HCT116 (cell line): ENCODE measurements at regions of chr5 and their contacts with region 1.

Region 1: GRCh38 chr5:88729084-88729828 is 153.7 kb downstream of the MEF2C start:
- DNase-seq: peak; percentile 75
- ATAC-seq: peak; percentile 92
- H3K4me3 ChIP-seq: no peak overlapping the region
- H3K27ac ChIP-seq: no peak overlapping the region
- H3K4me1 ChIP-seq: no peaks in the 10 kb centered on the region; a peak in 1 of 4 replicates
- H3K27me3 ChIP-seq: no peaks in the 10 kb centered on the region
- CTCF ChIP-seq: peak; percentile 54 to 76 (median 61); a peak in 5 of 6 replicates
- POLR2A ChIP-seq: no peak
- RAD21 ChIP-seq: peak; percentile 86

Region 2: DNA sequence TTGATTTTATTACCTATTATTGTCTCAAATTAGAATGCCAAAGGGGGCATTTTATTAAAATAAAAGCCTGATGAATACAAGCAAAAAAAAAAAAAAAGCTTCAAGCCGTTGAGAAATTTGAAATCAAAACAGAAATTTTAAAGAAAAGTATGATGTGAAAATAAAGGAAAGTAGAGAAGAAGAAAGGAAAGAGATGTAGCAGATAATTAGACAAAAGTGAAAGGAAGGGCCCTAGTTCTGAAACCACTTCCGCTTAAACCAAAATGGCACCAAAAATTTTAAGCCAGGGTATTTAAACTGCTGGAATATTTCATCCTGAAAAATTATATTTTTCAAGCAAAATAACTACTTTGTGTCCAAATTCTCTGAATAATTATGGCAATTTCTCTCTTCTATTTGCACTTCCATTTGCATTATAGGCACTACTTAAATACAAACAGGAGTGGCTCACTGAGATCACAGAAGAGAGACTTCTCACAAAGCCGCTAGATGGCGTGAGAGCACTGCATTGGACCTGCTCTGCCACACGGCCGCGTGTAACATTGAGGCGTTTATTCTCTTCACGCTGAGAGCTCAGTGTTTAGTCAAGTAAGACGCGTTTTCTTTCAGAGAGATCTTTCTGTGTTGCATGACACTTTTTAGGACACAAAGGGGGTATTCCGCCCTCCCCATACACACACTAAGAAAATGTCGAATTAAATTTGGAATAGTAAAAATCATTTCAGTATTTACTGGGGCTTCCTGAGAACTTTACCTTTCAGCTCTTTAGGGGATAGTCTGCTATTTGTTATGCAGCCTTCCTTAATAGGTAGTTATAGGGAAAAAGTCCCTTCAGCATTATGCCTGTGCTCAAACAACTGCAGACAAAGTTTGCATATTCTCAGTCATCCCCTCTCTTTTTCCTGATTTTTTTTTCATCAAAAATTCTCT is 948.2 kb before region 1 on chr5:
- CTCF ChIA-PET with region 1: interaction called, 79 read pairs
- POLR2A ChIA-PET with region 1: interaction called, 4 read pairs
- RAD21 ChIA-PET with region 1: interaction called, 5 read pairs
- intact Hi-C with region 1: loop called (anchors 1 kb)
- DNase-seq: peak; percentile 76
- ATAC-seq: peak; percentile 98
- H3K4me3 ChIP-seq: no peak overlapping the region; a peak in 1 of 4 replicates
- H3K27ac ChIP-seq: no peak overlapping the region
- H3K4me1 ChIP-seq: peaks cover 0 to 3% of the 10 kb centered on the region in 2 experiments; a peak in 1 of 4 replicates
- H3K27me3 ChIP-seq: no peaks in the 10 kb centered on the region
- CTCF ChIP-seq: peak; percentile 72 to 91 (median 85)
- POLR2A ChIP-seq: no peak
- RAD21 ChIP-seq: peak; percentile 95

Region 3: DNA sequence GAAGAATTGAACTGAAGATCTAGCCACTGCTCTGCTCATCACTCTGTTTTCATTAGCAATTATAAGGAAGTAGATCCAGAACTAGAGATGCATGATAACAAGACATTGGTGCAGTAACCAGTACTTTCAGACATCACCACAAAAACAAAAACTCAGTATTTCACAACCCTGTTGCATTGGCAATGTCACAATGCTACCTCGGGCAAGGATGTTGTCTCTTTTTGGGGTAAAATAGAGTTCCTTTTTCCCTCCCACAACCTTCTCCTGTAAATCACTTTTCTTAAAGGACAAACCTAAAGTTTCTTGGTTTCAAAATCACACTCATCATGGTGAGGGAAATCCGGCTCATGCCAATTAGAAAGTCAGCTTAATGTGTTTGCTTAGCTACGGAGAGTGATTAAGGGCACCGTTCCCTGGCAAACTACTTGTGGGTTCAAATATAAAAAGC is 573.8 kb after region 1 on chr5:
- CTCF ChIA-PET with region 1: no interaction called
- POLR2A ChIA-PET with region 1: no interaction called
- RAD21 ChIA-PET with region 1: no interaction called
- intact Hi-C with region 1: loop called (anchors 10 kb)
- DNase-seq: no peak
- ATAC-seq: no peak
- H3K4me3 ChIP-seq: no peak overlapping the region
- H3K27ac ChIP-seq: no peak overlapping the region
- H3K4me1 ChIP-seq: no peaks in the 10 kb centered on the region
- H3K27me3 ChIP-seq: no peaks in the 10 kb centered on the region
- CTCF ChIP-seq: no peak
- POLR2A ChIP-seq: no peak
- RAD21 ChIP-seq: no peak

Region 4: GRCh38 chr5:90161414-90161813 is 1432.2 kb after region 1 on chr5:
- CTCF ChIA-PET with region 1: interaction called, 16 read pairs
- POLR2A ChIA-PET with region 1: no interaction called
- RAD21 ChIA-PET with region 1: interaction called in 1 of 2 experiments, 3 read pairs
- intact Hi-C with region 1: loop called (anchors 1 kb)
- DNase-seq: peak; percentile 39
- ATAC-seq: peak; percentile 98
- H3K4me3 ChIP-seq: no peak overlapping the region
- H3K27ac ChIP-seq: no peak overlapping the region
- H3K4me1 ChIP-seq: no peaks in the 10 kb centered on the region
- H3K27me3 ChIP-seq: no peaks in the 10 kb centered on the region
- CTCF ChIP-seq: peak; percentile 46 to 50 (median 48)
- POLR2A ChIP-seq: no peak
- RAD21 ChIP-seq: peak; percentile 81

Region 5: GRCh38 chr5:90386099-90386710 is 1656.9 kb after region 1 on chr5:
- CTCF ChIA-PET with region 1: interaction called, 12 read pairs
- POLR2A ChIA-PET with region 1: no interaction called
- RAD21 ChIA-PET with region 1: no interaction called
- intact Hi-C with region 1: loop called (anchors 10 kb)
- DNase-seq: peak; percentile 21
- ATAC-seq: no peak
- H3K4me3 ChIP-seq: no peak overlapping the region
- H3K27ac ChIP-seq: no peak overlapping the region
- H3K4me1 ChIP-seq: peaks cover 3 to 6% of the 10 kb centered on the region in 2 experiments; a peak in 3 of 4 replicates
- H3K27me3 ChIP-seq: no peaks in the 10 kb centered on the region
- CTCF ChIP-seq: peak; percentile 31 to 65 (median 43); a peak in 5 of 6 replicates
- POLR2A ChIP-seq: no peak
- RAD21 ChIP-seq: peak; percentile 62